ENCODE measurements at regions of chr15 and their contacts with region 1.

Region 1: DNA sequence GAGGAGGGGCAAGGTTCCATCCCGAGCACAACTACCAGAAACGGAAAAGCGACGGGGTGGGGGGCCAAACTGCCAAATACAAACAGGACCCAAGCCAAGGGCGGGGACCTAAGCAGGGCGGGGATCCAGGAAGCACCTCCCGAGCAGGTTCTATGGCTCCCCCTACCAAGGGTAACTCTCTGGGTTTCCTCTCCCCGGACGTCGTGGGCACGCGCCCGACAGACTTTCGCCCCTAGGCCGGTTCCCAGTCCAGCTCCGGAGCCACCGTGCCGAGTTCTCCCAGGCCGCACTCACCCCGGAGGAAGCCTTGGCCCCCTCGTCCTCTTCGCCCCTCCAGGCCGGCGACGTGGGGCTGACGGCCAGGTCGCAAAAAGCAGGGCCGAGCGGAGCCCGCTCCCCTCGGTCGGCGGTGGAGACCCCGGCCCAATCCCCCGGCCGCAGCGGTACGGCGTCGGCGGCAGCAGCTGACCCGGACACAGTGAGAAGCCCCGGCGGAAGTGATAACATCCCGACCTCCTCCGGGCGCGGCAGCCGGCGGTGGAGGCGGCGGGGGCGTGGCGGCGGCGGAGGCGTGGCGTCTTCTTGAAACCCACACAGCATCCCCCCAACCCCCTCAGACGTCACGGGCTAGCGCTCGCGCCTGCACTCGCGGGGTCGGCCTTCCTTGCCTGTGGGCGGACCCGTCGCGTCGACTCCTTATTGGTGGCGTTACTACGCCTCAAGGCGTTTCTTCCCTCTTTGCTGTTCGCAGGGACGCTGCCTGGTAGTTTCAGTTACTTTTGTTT is at the start of gene BNIP2:
- DNase-seq: peak; percentile 98
- H3K4me3 ChIP-seq: peak within 1 kb of the TSS; percentile 97
- H3K27ac ChIP-seq: peak within 1 kb of the TSS; percentile 95
- H3K4me1 ChIP-seq: peaks cover 51% of the 10 kb centered on the region
- CTCF ChIP-seq: no peak; the same call in 1 of the 2 replicates
- total RNA-seq, gene BNIP2: 65.3 and 107 TPM in 2 replicates

Region 2: GRCh38 chr15:58933281-58934113 is 755.5 kb before region 1 on chr15 and contains the start of gene SLTM:
- CTCF ChIA-PET with region 1: no interaction called
- POLR2A ChIA-PET with region 1: no interaction called
- intact Hi-C with region 1: loop called (anchors 2 kb)
- DNase-seq: peak; percentile 95
- H3K4me3 ChIP-seq: peak within 1 kb of the TSS; percentile 77
- H3K27ac ChIP-seq: peak within 1 kb of the TSS; percentile 92
- H3K4me1 ChIP-seq: peaks cover 20% of the 10 kb centered on the region
- CTCF ChIP-seq: peak; percentile 58
- total RNA-seq, gene SLTM: 103 and 158 TPM in 2 replicates

Region 3: GRCh38 chr15:59372352-59373211 is 316.5 kb before region 1 on chr15 and contains the start of gene MYO1E:
- CTCF ChIA-PET with region 1: no interaction called
- POLR2A ChIA-PET with region 1: no interaction called
- intact Hi-C with region 1: no loop called
- DNase-seq: peak; percentile 40
- H3K4me3 ChIP-seq: peak within 1 kb of the TSS; percentile 67
- H3K27ac ChIP-seq: no peak within 1 kb of the TSS
- H3K4me1 ChIP-seq: peaks cover 21% of the 10 kb centered on the region
- CTCF ChIP-seq: no peak
- total RNA-seq, gene MYO1E: 0.72 and 1.5 TPM in 2 replicates

Region 4: DNA sequence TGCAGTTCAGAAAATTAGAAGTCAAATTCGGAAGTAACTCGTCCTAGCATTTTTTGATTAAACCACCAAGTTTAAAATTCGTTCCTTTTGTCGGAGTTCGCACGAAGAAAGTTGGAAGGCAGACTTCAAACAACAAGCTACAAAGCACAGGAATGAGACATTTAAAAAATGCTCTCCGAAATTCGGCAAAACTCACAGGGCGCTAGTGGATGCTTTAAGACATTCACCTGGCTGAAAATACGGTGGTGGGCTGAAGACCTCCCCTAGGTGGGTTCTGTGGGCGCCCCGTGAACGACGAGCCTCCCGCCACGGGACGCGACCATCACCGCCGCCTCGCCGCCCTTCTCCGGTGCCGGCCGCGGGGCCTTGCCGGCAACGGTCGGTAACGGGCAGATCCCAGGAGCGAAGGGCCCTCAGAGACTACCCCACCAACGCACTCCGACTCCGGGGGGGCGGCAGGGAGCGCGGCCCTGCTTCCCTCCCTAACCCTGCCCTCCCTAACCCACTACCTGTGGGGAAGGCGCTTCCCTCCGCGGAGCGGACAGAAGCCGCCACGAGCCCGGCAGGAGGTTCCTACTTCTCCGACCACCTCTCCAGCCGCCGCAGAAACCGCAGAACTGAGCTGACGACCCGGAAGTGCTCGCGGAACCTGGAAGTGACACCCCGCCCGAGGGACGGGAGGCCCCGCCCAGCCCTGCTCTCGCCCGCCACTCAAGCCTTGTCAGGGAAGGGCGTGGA is 32.0 kb before region 1 on chr15 and contains the start of gene GTF2A2:
- CTCF ChIA-PET with region 1: no interaction called
- POLR2A ChIA-PET with region 1: interaction called, 5 read pairs
- intact Hi-C with region 1: loop called (anchors 1 kb)
- DNase-seq: peak; percentile 96
- H3K4me3 ChIP-seq: peak within 1 kb of the TSS; percentile 95
- H3K27ac ChIP-seq: peak within 1 kb of the TSS; percentile 69
- H3K4me1 ChIP-seq: peaks cover 26% of the 10 kb centered on the region
- CTCF ChIP-seq: no peak
- total RNA-seq, gene GTF2A2: 50.5 and 69.3 TPM in 2 replicates

Region 5: GRCh38 chr15:60128000-60128376 is 439.0 kb after region 1 on chr15:
- CTCF ChIA-PET with region 1: no interaction called
- POLR2A ChIA-PET with region 1: no interaction called
- intact Hi-C with region 1: loop called (anchors 10 kb)
- DNase-seq: no peak
- H3K4me3 ChIP-seq: peak overlapping the region; percentile 66
- H3K27ac ChIP-seq: peak overlapping the region; percentile 22
- H3K4me1 ChIP-seq: peaks cover 17% of the 10 kb centered on the region
- CTCF ChIP-seq: no peak

Region 6: DNA sequence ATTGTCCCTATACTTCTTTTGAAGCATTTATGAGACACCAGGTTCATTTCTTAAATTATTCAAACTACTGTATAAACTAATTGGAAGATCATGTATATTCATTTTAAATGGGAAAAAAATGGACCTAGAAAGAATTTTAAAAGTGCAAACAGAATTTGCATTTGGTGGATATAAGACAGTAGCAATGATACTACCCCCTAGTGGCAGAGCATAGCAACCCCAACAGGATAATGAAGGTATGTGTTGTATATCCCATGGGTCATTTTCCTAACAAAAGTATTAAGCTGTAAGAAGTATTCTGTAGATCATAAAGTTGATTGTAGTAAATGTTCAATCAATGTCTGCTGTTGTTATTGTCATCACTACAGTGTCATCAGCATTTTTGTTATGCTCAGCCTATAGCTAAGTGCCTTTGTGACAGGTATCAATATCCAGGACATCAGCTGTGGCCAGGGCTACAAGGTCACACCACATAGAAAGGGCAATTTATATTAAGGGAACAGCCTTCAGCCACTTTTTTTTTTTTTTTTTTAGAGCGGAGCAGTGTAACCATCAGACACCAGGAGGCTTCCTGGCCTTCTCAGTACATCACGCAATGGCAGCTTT is 490.9 kb after region 1 on chr15:
- CTCF ChIA-PET with region 1: no interaction called
- POLR2A ChIA-PET with region 1: no interaction called
- intact Hi-C with region 1: loop called (anchors 10 kb)
- DNase-seq: peak; percentile 51
- H3K4me3 ChIP-seq: no peak overlapping the region
- H3K27ac ChIP-seq: no peak overlapping the region
- H3K4me1 ChIP-seq: no peaks in the 10 kb centered on the region
- CTCF ChIP-seq: peak; percentile 97

Region 7: DNA sequence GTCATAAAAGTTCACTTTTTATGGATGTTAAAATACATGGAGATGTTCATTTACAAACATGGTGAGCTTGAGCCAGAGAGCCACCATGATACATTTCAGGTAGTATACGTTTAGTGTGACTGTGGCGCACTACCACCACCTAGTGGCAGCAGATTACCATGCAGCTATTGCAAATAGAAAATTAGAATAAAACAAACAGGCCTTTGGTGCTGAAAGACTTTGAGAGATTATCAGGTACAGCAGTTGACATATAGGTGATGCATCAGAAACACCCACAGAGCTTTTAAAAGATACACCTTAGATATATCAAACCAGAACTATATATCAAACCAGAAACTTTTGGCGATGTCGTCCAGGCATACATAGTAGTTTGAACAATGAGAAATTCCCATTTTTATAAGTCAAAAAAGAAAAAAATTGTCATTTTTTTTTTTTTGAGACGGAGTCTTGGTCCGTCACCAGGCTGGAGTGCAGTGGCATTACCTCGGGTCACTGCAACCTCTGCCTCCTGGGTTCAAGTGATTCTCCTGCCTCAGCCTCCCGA is 831.9 kb after region 1 on chr15:
- CTCF ChIA-PET with region 1: no interaction called
- POLR2A ChIA-PET with region 1: no interaction called
- intact Hi-C with region 1: loop called (anchors 5 kb)
- DNase-seq: peak; percentile 73
- H3K4me3 ChIP-seq: no peak overlapping the region
- H3K27ac ChIP-seq: no peak overlapping the region
- H3K4me1 ChIP-seq: no peaks in the 10 kb centered on the region
- CTCF ChIP-seq: peak; percentile 98